Right ventricle myocardium superior (tissue), 1 donor: ENCODE measurements at regions of chr17 and their contacts with region 1.

Region 1: GRCh38 chr17:75784473-75785015 is at the start of gene UNK:
- DNase-seq: peak; percentile 97
- ATAC-seq: peak; percentile 93
- total RNA-seq, gene UNK: 14.3 TPM

Region 2: DNA sequence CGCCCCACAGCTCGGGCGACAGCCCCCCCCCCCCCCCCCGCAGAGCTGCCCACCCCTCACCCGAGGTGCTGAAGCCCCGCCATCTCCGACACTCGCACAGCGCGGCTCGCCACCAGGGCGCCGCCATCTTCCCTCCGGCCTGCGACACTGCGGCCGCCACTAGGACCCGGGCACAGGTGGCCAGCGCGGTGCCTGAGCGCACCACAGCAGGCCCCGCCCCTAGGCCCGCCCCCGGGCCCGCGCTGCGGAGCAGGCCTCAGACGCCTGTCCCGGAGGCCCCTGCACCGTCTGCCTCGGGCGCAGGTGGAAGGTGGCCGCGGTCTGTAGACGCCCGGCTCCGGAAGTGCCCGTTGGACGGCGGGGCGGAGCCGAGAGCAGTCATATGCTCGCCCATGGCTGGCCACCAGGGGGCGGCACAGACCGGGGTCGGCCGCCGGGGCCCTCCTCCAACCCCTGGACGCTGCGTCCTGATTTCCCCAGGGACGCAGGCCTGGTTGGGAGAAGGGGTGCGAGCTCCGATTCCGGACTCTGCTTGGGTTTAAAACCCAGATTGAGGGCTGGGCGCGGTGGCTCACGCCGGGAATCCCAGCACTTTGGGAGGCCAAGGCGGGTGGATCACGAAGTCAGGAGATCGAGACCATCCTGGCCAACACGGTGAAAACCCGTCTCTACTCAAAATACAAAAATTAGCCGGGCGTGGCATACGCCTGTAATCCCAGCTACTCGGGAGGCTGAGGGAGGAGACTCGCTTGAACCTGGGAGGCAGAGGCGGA is 120.4 kb after region 1 on chr17 and contains the start of gene MRPL38:
- intact Hi-C with region 1: no loop called
- DNase-seq: peak; percentile 95
- ATAC-seq: peak; percentile 91
- total RNA-seq, gene MRPL38: 113 TPM

Region 3: DNA sequence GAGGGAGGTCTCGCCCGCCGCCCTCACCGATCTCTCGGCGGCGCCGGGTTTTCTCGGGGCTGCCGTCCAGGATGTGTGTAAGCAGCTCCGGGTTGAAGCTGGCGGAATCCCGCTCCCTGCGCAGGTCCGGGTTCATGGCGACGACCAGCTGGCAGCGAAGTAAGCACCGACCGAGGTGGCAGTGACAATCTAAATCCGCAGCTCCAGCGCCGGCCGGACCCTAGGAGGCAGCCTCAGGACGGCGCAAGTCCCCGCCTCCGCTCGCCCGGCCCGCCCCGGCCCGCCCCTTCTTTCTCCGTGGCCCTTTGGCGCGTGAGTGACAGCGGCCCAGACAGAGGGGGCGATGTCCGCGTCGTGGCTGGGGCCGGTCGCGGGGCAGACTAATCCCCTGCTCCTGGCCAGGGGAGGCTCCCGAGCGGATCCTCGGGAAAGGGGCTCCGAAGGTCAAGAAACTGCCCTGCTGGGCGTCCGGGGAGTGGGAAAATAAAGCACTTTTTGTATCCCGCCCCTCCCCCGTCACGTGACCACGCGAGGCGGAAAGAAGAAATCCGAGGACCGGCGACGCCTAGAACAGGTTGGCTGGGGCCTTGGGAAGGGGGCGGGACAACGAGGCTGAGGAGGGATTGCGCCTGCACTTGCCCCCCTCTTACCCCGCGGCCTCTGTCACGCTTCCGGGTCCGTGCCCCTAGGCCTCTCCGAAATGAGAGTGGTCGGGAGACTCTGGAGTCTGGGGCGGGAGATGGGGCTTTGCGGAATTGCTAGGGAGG is 194.6 kb after region 1 on chr17 and contains the starts of genes ACOX1 and TEN1:
- intact Hi-C with region 1: loop called (anchors 5 kb)
- DNase-seq: peak; percentile 99
- ATAC-seq: peak; percentile 97
- total RNA-seq, gene ACOX1: 83.6 TPM
- total RNA-seq, gene TEN1: 7.6 TPM